SK-N-SH (cell line): ENCODE measurements at regions of chr10 and their contacts with region 1.

Region 1: GRCh38 chr10:84415539-84416244 is 87.3 kb downstream of the CCSER2 start:
- DNase-seq: no peak
- H3K4me3 ChIP-seq: no peak overlapping the region
- H3K27ac ChIP-seq: no peak overlapping the region
- H3K4me1 ChIP-seq: no peaks in the 10 kb centered on the region
- H3K27me3 ChIP-seq: no peaks in the 10 kb centered on the region
- CTCF ChIP-seq: no peak
- EP300 ChIP-seq: no peak
- RAD21 ChIP-seq: no peak

Region 2: GRCh38 chr10:84401854-84402611 is 13.7 kb before region 1 on chr10:
- CTCF ChIA-PET with region 1: no interaction called
- POLR2A ChIA-PET with region 1: no interaction called
- DNase-seq: no peak
- H3K4me3 ChIP-seq: no peak overlapping the region
- H3K27ac ChIP-seq: no peak overlapping the region
- H3K4me1 ChIP-seq: no peaks in the 10 kb centered on the region; a peak in 1 of 4 replicates
- H3K27me3 ChIP-seq: no peaks in the 10 kb centered on the region
- CTCF ChIP-seq: no peak
- EP300 ChIP-seq: no peak
- RAD21 ChIP-seq: no peak

Region 3: DNA sequence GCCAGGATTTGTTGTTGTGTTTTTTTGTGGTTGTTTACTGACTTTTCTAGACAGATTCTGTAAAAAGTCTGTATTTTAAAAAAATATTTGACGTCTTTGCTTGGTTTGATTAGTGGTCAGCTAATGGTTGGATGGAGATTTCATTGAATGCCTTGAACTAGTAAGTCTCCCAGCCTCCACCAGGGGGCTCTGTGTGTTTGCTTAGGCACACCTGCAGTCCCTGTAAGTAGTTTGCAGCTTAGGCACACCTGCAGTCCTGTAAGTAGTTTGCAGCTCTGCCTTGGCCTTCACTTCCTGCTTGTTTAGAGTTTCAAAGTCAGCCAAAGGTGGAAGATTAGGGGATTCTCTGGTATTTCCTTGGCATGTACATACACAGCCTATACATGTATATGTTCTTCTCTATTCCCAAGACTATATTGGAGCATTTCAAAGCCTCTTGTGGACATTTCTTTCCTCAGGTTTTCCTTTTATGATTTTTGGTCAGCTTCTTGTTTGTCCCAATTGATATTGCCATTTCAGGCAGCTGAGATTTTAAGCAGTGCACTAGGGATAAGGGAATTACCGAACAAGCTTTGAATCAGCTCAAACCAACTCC is 14.3 kb after region 1 on chr10:
- CTCF ChIA-PET with region 1: interaction called, 10 read pairs
- POLR2A ChIA-PET with region 1: no interaction called
- DNase-seq: peak; percentile 30
- H3K4me3 ChIP-seq: no peak overlapping the region
- H3K27ac ChIP-seq: no peak overlapping the region
- H3K4me1 ChIP-seq: peaks cover 4 to 11% of the 10 kb centered on the region in 2 experiments; a peak in 3 of 4 replicates
- H3K27me3 ChIP-seq: no peaks in the 10 kb centered on the region
- CTCF ChIP-seq: peak; percentile 73
- EP300 ChIP-seq: no peak
- RAD21 ChIP-seq: peak; percentile 59